ENCODE measurements at regions of chr7 and their contacts with region 1.

Region 1: DNA sequence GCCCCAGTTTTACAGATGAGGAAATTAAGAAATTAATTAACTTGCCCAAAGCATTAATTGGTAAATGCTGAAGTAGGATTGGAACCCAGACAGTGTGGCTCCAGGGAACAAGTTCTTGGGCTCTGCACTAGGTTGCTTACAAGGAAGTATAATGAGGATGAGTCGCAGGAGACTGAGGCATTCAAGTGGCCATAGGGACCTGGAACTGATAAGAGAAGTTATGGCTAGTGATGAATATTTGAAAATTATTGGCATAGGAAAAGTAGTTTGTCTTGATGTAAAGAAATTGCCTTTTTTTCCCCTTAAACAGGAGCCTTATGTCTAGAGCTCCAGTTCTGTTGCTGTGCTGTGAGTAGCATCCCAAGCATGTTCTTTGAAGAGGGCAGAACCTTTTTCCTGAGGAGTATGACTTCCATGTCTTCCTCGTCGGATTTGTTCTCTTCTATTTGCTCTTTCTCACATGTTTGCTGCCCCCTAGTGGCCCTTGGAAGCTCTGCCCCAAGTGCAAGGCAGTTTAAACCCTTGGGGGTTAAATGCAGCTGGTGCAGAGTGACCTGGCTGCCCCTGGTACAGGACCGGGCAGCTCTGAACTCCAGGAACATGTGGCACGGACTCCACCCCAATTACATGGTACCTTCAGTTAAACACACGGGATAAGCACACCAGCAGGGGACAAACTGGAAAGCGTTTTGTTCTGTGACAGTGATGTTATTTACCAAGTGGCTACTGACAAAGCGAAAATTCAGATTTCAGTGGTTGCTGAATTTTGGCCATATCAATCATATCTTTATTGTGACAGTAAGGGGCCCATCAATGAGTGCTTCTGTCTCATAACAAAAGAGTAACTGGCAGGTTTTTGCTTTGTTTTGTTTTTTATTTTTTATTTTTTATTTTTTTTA is 148.8 kb downstream of the HECW1 start:
- DNase-seq: peak; percentile 33
- ATAC-seq: peak; percentile 99
- H3K4me3 ChIP-seq: no peak overlapping the region
- H3K27ac ChIP-seq: no peak overlapping the region
- H3K4me1 ChIP-seq: no peaks in the 10 kb centered on the region
- H3K27me3 ChIP-seq: no peaks in the 10 kb centered on the region
- CTCF ChIP-seq: peak; percentile 90 to 95 (median 90)
- EP300 ChIP-seq: no peak
- POLR2A ChIP-seq: no peak
- RAD21 ChIP-seq: peak; percentile 96

Region 2: GRCh38 chr7:42876182-42877068 is 384.8 kb before region 1 on chr7:
- CTCF ChIA-PET with region 1: interaction called, 13 read pairs
- POLR2A ChIA-PET with region 1: no interaction called
- RAD21 ChIA-PET with region 1: no interaction called
- SMC1A ChIA-PET with region 1: interaction called, 5 read pairs
- in situ Hi-C with region 1: no loop called
- intact Hi-C with region 1: no loop called
- DNase-seq: no peak
- ATAC-seq: peak; percentile 93
- H3K4me3 ChIP-seq: no peak overlapping the region
- H3K27ac ChIP-seq: no peak overlapping the region
- H3K4me1 ChIP-seq: no peaks in the 10 kb centered on the region
- H3K27me3 ChIP-seq: no peaks in the 10 kb centered on the region
- CTCF ChIP-seq: peak; percentile 76 to 86 (median 81)
- EP300 ChIP-seq: no peak
- POLR2A ChIP-seq: no peak
- RAD21 ChIP-seq: peak; percentile 70

Region 3: DNA sequence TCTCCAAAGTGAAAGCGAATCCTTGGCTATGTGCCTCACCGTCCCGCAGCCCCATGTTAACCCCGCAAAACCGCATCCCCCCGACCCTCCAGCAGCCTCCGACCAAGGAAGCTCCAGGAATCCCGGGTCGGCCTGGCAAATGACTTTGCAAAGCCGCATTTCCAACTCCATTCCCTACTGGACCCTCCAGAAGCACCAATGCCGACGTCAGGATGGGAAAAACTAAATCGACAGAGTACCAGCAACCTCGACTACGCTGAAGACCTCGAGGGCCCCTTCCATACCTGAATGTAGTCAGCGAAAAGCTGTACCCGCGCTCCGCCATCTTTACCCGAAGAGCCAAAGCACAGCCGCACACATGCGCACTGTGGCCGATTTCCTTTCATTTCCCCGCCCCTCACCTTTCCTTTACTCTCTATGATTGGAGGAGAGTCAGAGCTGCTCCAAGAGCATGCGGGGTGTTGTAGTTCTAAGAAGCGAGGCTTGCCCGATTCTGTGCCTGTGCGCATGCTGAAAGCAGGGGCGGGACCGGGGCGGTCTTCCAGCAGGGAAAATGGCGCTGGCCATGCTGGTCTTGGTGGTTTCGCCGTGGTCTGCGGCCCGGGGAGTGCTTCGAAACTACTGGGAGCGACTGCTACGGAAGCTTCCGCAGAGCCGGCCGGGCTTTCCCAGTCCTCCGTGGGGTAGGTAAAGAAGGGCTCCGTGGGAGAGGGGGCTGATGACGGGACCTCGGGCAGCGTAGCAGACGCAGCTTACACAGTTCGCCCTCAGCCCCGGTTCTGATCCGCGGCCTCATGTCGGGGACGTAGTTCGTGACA is 329.2 kb before region 1 on chr7 and contains the starts of genes MRPL32 and PSMA2:
- CTCF ChIA-PET with region 1: interaction called, 25 read pairs
- POLR2A ChIA-PET with region 1: no interaction called
- RAD21 ChIA-PET with region 1: interaction called, 17 read pairs
- SMC1A ChIA-PET with region 1: interaction called, 16 read pairs
- in situ Hi-C with region 1: loop called (anchors 5 kb)
- intact Hi-C with region 1: no loop called
- DNase-seq: peak; percentile 95
- ATAC-seq: peak; percentile 97
- H3K4me3 ChIP-seq: peak within 1 kb of the TSS; percentile 94
- H3K27ac ChIP-seq: peak within 1 kb of the TSS; percentile 86
- H3K4me1 ChIP-seq: peaks cover 15% of the 10 kb centered on the region; the same call in 1 of the 2 replicates
- H3K27me3 ChIP-seq: no peaks in the 10 kb centered on the region
- CTCF ChIP-seq: no peak
- EP300 ChIP-seq: no peak
- POLR2A ChIP-seq: peak; percentile 96
- RAD21 ChIP-seq: no peak
- polyA plus RNA-seq, gene MRPL32: 274 to 339 TPM
- polyA plus RNA-seq, gene PSMA2: 1,068 to 1,223 TPM

Region 4: DNA sequence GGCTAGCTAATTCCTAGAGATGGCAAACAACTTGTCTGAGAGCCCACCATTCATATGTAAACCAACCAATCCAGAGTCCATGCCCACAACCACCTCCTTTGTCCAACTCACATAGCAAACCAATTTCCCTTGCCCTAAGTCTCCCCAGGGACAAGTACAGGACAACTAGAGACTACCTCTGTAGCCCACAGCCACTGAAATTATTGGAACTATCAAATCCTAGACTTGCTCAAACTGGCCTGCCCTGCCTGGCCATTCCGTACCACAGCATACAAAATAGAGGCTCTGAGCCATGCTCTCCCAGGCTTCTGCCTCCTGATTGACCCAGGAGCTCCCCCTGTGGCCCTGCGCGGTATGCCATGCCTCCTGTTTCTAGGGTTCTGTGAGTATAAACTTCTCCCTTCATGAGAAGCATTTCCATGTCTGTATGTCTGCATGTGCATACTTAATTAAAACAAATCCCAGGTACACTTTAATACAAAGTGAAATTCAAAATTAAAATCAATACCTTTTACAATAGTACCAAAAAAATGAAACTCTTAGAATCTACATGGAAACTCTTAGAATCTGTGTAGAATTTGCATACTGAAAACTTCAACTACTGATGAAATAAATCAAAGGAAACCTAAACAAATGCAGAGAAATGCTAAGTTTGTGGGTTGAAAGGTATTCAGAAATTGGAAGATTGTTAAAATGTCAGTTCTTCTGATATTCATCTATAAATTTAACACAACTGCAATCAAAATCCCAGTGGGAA is 152.8 kb before region 1 on chr7:
- CTCF ChIA-PET with region 1: interaction called, 10 read pairs
- POLR2A ChIA-PET with region 1: no interaction called
- RAD21 ChIA-PET with region 1: interaction called, 7 read pairs
- SMC1A ChIA-PET with region 1: interaction called, 6 read pairs
- in situ Hi-C with region 1: no loop called
- intact Hi-C with region 1: loop called (anchors 5 kb)
- DNase-seq: peak; percentile 31
- ATAC-seq: peak; percentile 88
- H3K4me3 ChIP-seq: no peak overlapping the region
- H3K27ac ChIP-seq: no peak overlapping the region
- H3K4me1 ChIP-seq: no peaks in the 10 kb centered on the region
- H3K27me3 ChIP-seq: no peaks in the 10 kb centered on the region
- CTCF ChIP-seq: peak; percentile 89 to 98 (median 95); a peak in 5 of 6 replicates
- EP300 ChIP-seq: no peak
- POLR2A ChIP-seq: no peak
- RAD21 ChIP-seq: peak; percentile 86

Region 5: DNA sequence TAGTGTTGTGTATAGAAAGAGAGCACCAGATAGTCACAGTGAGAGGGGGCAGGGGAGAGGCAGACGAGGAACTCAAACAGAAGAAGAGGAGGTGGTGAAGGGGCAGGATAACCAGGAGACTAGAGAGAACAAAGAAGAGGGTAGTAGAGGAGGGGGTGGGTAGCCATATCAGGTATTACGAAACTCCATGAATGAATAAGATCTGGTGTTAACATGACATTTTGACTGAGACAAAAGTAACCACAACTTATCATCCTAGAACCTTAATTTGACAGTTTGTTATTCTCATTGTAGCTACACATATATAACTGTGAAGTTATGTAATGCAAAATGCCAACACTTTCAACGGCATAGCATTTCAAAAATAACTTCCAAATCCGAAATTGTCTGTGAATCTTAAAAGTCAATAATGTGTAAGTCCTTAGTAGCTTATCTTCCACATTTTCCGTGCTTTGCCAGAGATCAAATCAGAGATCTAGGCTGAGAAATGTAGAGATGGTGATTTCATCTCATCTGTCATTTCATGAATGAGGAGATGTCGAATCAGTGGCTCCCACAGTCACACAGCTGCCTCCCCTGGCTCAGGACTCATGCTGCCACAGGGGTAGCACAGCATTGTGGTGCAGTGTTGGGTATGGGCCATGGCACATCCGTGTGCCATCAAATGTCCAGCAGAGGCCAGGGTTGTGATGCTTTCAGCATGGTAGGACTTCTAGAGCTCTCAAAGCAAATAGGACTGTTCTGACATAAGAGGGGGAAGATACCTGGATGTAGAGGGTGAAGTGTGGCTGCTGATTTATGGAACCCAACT is 53.4 kb after region 1 on chr7:
- CTCF ChIA-PET with region 1: interaction called, 16 read pairs
- POLR2A ChIA-PET with region 1: interaction called, 3 read pairs
- RAD21 ChIA-PET with region 1: interaction called, 8 read pairs
- SMC1A ChIA-PET with region 1: interaction called, 22 read pairs
- in situ Hi-C with region 1: no loop called
- intact Hi-C with region 1: no loop called
- DNase-seq: no peak
- ATAC-seq: peak; percentile 85
- H3K4me3 ChIP-seq: no peak overlapping the region
- H3K27ac ChIP-seq: no peak overlapping the region; the same call in 1 of the 2 replicates
- H3K4me1 ChIP-seq: peaks cover 17% of the 10 kb centered on the region
- H3K27me3 ChIP-seq: no peaks in the 10 kb centered on the region
- CTCF ChIP-seq: peak in 2 of 3 experiments; percentile 11 to 36; a peak in 3 of 6 replicates
- EP300 ChIP-seq: peak; percentile 92 to 96; a peak in 3 of 4 replicates
- POLR2A ChIP-seq: no peak
- RAD21 ChIP-seq: peak; percentile 18; the same call in 1 of the 2 replicates

Region 6: GRCh38 chr7:43439631-43440401 is 178.6 kb after region 1 on chr7:
- CTCF ChIA-PET with region 1: interaction called, 29 read pairs
- POLR2A ChIA-PET with region 1: interaction called, 3 read pairs
- RAD21 ChIA-PET with region 1: interaction called, 14 read pairs
- SMC1A ChIA-PET with region 1: interaction called, 15 read pairs
- in situ Hi-C with region 1: no loop called
- intact Hi-C with region 1: loop called (anchors 2 kb)
- DNase-seq: peak; percentile 13
- ATAC-seq: peak; percentile 97
- H3K4me3 ChIP-seq: no peak overlapping the region
- H3K27ac ChIP-seq: no peak overlapping the region
- H3K4me1 ChIP-seq: no peaks in the 10 kb centered on the region
- H3K27me3 ChIP-seq: no peaks in the 10 kb centered on the region; a peak in 1 of 4 replicates
- CTCF ChIP-seq: peak; percentile 81 to 92 (median 89)
- EP300 ChIP-seq: no peak
- POLR2A ChIP-seq: no peak
- RAD21 ChIP-seq: peak; percentile 66

Region 7: DNA sequence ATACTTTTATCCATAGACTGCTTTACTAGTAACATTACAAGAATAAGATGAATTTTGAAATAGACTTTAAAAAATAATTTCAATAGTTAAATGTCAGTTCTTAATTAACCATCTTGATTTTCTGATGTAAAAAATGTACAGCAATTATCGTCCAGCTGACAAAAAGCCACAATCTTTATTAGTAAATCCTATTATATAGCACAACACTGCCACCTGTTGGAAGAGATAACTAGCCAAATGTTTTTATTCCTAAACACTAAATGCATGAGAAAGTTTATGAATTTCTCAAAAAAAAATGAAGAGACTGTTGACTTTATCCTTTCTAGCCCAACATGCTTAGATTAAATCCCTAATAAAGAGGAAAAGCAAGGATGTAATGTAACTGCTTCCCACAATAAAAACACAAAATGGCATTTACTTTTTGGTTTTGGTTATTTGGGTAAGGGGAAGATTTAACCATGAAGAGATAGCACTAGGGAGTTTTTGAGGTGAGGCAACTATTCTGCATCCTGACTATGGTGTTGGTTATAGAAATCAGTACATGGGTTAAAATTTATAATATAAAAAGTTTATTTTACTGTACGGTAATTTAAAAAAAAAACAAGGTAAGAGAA is 460.1 kb after region 1 on chr7:
- CTCF ChIA-PET with region 1: interaction called, 13 read pairs
- POLR2A ChIA-PET with region 1: no interaction called
- RAD21 ChIA-PET with region 1: no interaction called
- SMC1A ChIA-PET with region 1: interaction called, 3 read pairs
- in situ Hi-C with region 1: no loop called
- intact Hi-C with region 1: no loop called
- DNase-seq: no peak
- ATAC-seq: peak; percentile 52
- H3K4me3 ChIP-seq: no peak overlapping the region
- H3K27ac ChIP-seq: no peak overlapping the region
- H3K4me1 ChIP-seq: no peaks in the 10 kb centered on the region
- H3K27me3 ChIP-seq: no peaks in the 10 kb centered on the region
- CTCF ChIP-seq: peak; percentile 40 to 64 (median 44); a peak in 5 of 6 replicates
- EP300 ChIP-seq: no peak
- POLR2A ChIP-seq: no peak
- RAD21 ChIP-seq: peak; percentile 68

Measured in GM12878 (cell line).